ENCODE measurements at regions of chr2 and their contacts with region 1.

Region 1: DNA sequence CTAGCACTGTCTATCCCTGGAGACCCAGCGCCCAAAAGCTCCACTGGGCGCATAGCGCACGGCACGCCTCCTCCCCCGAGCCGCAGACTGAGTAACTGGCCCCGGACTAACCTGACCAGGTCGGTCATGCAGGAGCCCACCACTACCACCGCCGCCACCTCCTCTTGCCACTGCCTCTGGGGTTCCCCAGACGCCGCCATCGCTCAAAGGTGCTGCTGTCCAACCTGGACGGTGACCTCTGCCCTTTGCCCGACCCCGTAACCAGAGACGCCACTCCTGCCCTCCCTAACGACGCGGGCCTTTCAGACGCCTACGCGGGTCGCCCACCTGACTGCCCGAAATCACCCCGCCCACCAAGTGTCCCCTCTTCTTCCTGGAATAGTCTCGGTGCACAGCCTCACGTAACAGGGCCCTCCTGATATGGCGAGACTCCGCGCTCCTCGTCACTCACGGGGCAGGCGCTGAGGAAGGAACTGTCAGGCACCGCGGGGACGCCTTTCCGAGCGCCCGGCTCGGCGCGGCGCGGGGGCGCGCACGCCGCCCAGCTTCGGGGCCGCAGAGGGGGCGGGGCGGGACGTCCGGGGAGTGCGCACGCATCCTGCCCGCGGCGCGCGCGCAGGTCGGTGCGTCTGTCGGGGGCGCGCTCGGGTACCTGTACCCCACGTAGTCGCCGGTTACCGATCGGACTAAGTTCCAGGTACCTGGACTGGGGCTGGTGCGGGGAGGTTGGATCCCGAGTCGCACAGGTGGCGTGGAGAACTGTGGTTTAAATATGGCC is at the starts of genes BABAM2 and RBKS:
- DNase-seq: peak; percentile 93
- H3K4me3 ChIP-seq: peak within 1 kb of the TSS; percentile 64 to 77 (median 70)
- H3K27ac ChIP-seq: peak within 1 kb of the TSS; percentile 91 to 97 (median 94)
- H3K4me1 ChIP-seq: peaks cover 0 to 28% (median 19%) of the 10 kb centered on the region in 4 donors
- H3K27me3 ChIP-seq: no peaks in the 10 kb centered on the region
- CTCF ChIP-seq: no peak
- EP300 ChIP-seq: peak in 2 of 4 donors; percentile 68 to 97
- POLR2A ChIP-seq: peak; percentile 46 to 76
- total RNA-seq, gene BABAM2: 24.4 to 52.3 (median 31.2) TPM
- total RNA-seq, gene RBKS: 0.55 to 3.1 (median 1.9) TPM

Region 2: GRCh38 chr2:27771548-27772335 is 118.6 kb before region 1 on chr2 and contains the start of gene MRPL33:
- intact Hi-C with region 1: loop called (anchors 2 kb)
- DNase-seq: peak; percentile 98
- H3K4me3 ChIP-seq: peak within 1 kb of the TSS; percentile 58 to 91 (median 73)
- H3K27ac ChIP-seq: peak within 1 kb of the TSS; percentile 84 to 96 (median 94)
- H3K4me1 ChIP-seq: peaks cover 0 to 52% (median 45%) of the 10 kb centered on the region in 4 donors
- H3K27me3 ChIP-seq: no peaks in the 10 kb centered on the region
- CTCF ChIP-seq: no peak
- EP300 ChIP-seq: peak in 1 of 4 donors; percentile 69
- POLR2A ChIP-seq: peak; percentile 71 to 86
- total RNA-seq, gene MRPL33: 178 to 324 (median 239) TPM

Region 3: GRCh38 chr2:27832396-27832795 is 57.9 kb before region 1 on chr2:
- intact Hi-C with region 1: no loop called
- DNase-seq: no peak
- H3K4me3 ChIP-seq: no peak overlapping the region
- H3K27ac ChIP-seq: no peak overlapping the region
- H3K4me1 ChIP-seq: no peaks in the 10 kb centered on the region
- H3K27me3 ChIP-seq: no peaks in the 10 kb centered on the region
- CTCF ChIP-seq: no peak
- EP300 ChIP-seq: no peak
- POLR2A ChIP-seq: no peak

Region 4: DNA sequence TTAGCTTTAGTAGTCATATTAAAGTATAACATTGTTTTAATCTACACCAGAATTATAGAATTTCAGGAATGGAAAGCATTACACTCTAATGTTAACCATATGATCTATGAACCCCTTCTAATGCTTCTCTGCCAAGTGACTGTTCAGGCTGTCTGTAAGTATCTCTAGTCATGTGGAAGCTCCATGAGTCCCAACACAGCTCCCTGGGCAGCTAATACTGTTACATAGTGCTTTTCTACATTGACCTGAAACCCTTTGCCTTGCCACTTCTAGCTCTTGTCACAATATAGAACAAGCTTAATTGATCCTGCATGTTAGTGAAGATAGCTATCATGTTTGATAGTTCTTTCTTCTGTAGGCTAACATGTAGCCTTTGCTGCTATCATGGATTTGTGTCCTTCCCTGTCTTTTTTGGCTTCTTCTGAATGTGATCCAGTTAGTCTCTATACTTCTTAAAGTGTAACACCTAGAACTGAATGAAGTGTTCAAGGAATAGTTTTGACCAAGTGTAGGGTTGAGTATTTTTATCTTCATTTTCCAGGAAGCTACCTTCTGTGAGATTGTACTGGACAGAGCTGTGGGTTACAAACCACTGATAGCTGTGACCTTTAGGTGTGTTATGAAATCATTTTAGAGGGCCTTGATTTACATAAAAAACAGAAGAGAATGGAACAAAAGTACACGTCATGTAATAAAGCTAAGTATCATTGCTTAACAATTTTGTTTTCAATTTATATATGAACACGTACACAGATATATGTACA is 23.9 kb after region 1 on chr2:
- intact Hi-C with region 1: loop called (anchors 2 kb)
- DNase-seq: no peak
- H3K4me3 ChIP-seq: no peak overlapping the region
- H3K27ac ChIP-seq: peak overlapping the region; percentile 75 to 83 (median 81)
- H3K4me1 ChIP-seq: peaks cover 0 to 36% (median 33%) of the 10 kb centered on the region in 4 donors
- H3K27me3 ChIP-seq: no peaks in the 10 kb centered on the region
- CTCF ChIP-seq: no peak
- EP300 ChIP-seq: no peak
- POLR2A ChIP-seq: no peak

Region 5: DNA sequence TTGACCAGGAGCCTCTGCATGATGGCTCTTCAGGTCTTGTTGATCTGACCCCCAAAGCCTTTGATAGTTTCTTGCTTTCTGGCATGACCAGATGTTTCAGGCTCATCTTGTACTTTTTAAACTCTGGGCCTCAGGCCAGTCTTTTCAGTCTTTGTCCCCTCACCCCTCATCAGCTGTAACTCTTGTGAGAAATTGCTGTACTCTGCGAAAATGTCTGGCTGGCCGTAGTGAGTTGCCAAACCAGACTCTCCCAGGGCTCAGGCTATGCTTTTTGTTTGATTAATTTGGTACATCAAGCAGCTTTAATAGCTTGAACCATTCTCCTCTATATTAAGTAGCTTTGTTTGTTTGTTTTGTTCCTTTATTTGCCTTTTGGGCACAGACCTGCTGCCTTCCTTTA is 76.1 kb after region 1 on chr2:
- intact Hi-C with region 1: no loop called
- DNase-seq: no peak
- H3K4me3 ChIP-seq: no peak overlapping the region
- H3K27ac ChIP-seq: no peak overlapping the region
- H3K4me1 ChIP-seq: peaks cover 0 to 12% (median 0%) of the 10 kb centered on the region in 4 donors
- H3K27me3 ChIP-seq: no peaks in the 10 kb centered on the region
- CTCF ChIP-seq: no peak
- EP300 ChIP-seq: no peak
- POLR2A ChIP-seq: no peak

Region 6: DNA sequence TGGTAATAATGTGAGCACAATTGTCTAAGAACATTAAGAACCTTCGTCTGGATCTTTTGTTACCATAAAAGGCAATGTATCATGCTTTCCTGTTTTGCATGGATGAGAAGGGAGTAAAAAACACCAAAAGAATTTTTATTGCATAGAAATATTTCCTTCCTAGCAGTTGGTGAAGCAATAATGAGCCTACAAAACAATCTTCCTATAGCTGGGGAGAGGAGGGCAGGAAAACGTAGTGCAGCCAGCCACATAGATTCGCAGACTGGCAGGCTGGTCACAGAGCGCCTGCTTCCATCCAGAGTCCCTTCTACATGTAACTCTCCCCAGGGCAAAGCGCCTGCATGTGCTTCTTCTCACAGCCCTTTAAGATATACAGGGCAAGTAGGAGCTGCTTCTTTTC is 190.6 kb after region 1 on chr2:
- intact Hi-C with region 1: loop called (anchors 5 kb)
- DNase-seq: peak; percentile 74
- H3K4me3 ChIP-seq: no peak overlapping the region
- H3K27ac ChIP-seq: peak overlapping the region; percentile 50 to 75 (median 70)
- H3K4me1 ChIP-seq: peaks cover 0 to 44% (median 30%) of the 10 kb centered on the region in 4 donors
- H3K27me3 ChIP-seq: no peaks in the 10 kb centered on the region
- CTCF ChIP-seq: no peak
- EP300 ChIP-seq: peak in 1 of 4 donors; percentile 6
- POLR2A ChIP-seq: no peak

Region 7: DNA sequence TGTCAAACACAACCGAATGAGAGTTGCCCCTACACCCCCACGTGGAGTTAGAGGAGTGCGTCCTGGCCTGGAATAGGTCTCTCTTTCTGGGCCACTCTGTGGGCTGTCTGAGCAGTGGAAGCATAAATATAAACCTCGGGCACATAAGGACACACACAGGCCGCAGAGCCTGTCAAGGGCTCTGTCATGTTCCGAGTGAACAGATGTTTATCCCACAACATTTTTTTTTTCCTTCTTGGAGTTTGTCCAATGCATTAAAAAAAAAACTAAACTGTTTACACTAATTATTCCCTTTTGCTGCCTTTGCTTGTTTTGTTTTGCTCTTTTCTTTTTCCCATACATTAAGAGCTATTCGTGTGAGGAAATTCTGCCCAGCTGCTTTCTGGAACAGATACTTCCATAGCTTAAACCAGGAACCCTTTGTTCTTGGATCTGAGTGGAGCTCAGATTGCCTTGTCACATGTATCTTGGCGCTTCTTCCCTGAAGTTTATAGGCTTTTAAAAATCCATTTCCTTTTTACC is 274.0 kb after region 1 on chr2:
- intact Hi-C with region 1: loop called (anchors 5 kb)
- DNase-seq: peak; percentile 67
- H3K4me3 ChIP-seq: peak overlapping the region in 1 of 4 donors; percentile 3
- H3K27ac ChIP-seq: peak overlapping the region; percentile 51 to 86 (median 76)
- H3K4me1 ChIP-seq: peaks cover 0 to 43% (median 39%) of the 10 kb centered on the region in 4 donors
- H3K27me3 ChIP-seq: no peaks in the 10 kb centered on the region
- CTCF ChIP-seq: no peak
- EP300 ChIP-seq: peak in 2 of 4 donors; percentile 34 to 86
- POLR2A ChIP-seq: no peak

Region 8: DNA sequence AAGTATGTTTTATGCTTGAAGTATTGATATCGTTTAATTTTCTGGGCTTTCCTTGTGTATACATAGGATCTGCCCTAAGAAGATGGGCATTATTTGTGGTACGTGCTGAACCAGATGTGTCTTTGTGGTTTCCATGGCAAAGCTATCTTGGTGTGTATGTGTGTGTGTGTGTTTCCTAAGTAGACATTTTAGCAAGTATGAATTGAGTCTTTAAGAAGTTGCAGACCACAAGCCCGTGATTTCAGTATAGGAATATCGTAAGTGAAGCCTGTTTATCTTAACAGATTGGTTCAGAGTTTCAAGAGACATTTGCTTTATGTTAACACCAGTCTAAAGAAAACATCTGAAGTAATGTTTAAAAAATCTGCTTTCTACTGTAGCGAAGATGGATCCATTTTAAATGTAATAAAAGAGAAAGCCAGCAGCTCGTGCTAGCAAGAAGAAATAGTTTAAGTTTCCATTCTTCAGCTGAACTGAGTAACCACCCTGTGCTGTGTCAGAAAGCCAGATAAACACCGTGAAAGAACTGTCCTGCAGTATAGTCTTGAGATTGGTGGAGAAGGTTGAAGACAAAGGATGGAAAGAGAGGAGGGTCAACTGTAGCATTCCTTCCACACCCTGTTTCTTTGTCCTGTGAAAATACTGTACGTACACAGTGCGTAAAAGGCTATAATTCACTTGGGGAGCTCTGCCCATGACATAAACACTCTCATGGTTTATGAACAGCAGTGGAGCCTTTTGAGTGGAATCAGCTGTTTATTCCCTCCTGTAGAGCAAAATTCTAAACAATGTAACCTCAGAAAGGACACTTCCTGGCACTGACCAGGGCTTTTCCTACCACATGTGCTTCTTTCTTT is 410.4 kb after region 1 on chr2:
- intact Hi-C with region 1: loop called (anchors 1 kb)
- DNase-seq: peak; percentile 77
- H3K4me3 ChIP-seq: peak overlapping the region; percentile 13 to 36 (median 26)
- H3K27ac ChIP-seq: peak overlapping the region; percentile 72 to 89 (median 82)
- H3K4me1 ChIP-seq: peaks cover 0 to 20% (median 19%) of the 10 kb centered on the region in 4 donors
- H3K27me3 ChIP-seq: no peaks in the 10 kb centered on the region
- CTCF ChIP-seq: no peak
- EP300 ChIP-seq: peak; percentile 86 to 97 (median 96)
- POLR2A ChIP-seq: no peak

Region 9: GRCh38 chr2:28338046-28338817 is 447.9 kb after region 1 on chr2:
- intact Hi-C with region 1: no loop called
- DNase-seq: peak; percentile 94
- H3K4me3 ChIP-seq: no peak overlapping the region
- H3K27ac ChIP-seq: peak overlapping the region; percentile 48 to 73 (median 62)
- H3K4me1 ChIP-seq: peaks cover 0 to 66% (median 50%) of the 10 kb centered on the region in 4 donors
- H3K27me3 ChIP-seq: no peaks in the 10 kb centered on the region
- CTCF ChIP-seq: no peak
- EP300 ChIP-seq: peak in 1 of 4 donors; percentile 65
- POLR2A ChIP-seq: no peak